SK-N-SH (cell line): ENCODE measurements at regions of chr22 and their contacts with region 1.

Region 1: GRCh38 chr22:20568989-20569769 is 61.8 kb downstream of the MED15 start:
- DNase-seq: no peak
- H3K4me3 ChIP-seq: no peak overlapping the region
- H3K27ac ChIP-seq: peak overlapping the region; percentile 66 to 76
- H3K4me1 ChIP-seq: peaks cover 9 to 22% of the 10 kb centered on the region in 2 experiments; a peak in 3 of 4 replicates
- H3K27me3 ChIP-seq: no peaks in the 10 kb centered on the region
- CTCF ChIP-seq: no peak
- EP300 ChIP-seq: no peak
- RAD21 ChIP-seq: no peak

Region 2: DNA sequence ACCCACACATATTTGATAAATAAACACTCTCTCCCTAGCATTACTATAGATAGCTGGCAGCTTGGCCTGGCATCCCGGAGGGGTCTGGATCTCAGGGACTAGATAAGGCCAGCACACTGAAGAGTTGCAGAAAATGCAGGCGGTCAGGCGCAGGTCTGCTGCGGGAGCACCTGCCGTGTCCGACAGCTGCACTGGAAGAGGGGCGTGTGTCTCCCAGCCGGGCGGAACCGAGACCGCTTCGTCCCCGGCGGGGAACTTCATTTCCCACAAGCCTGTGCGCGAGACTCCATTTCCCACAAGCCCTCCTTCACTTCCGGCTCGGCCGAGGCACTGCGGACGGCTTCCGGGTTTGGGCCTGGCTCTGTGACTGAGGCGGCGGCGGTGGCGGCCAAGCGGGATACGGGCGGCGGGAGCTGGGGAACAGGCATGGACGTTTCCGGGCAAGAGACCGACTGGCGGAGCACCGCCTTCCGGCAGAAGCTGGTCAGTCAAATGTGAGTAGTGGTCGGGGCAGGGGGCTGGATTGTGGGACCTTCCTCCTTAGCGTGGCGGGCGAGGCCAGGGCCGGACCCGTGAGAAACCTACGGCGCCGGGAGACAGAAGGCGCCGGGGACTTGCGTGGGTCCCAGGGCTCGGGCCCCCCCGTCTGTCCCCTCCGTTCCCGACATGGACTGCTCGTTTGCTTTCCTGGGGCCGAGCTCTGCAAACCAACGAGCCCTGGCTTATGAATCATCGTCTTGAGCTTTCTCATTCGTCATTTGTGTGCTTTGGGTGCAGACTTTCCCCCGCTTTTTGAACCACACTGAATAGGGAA is 61.7 kb before region 1 on chr22 and contains the start of gene MED15:
- CTCF ChIA-PET with region 1: interaction called, 11 read pairs
- POLR2A ChIA-PET with region 1: no interaction called
- DNase-seq: peak; percentile 90
- H3K4me3 ChIP-seq: peak within 1 kb of the TSS; percentile 67 to 78
- H3K27ac ChIP-seq: peak within 1 kb of the TSS; percentile 87 to 96
- H3K4me1 ChIP-seq: peaks cover 22 to 34% of the 10 kb centered on the region in 2 experiments; a peak in 3 of 4 replicates
- H3K27me3 ChIP-seq: no peaks in the 10 kb centered on the region
- CTCF ChIP-seq: no peak
- EP300 ChIP-seq: no peak
- RAD21 ChIP-seq: no peak
- polyA plus RNA-seq, gene MED15: 36.0 and 45.1 TPM in 2 replicates

Region 3: DNA sequence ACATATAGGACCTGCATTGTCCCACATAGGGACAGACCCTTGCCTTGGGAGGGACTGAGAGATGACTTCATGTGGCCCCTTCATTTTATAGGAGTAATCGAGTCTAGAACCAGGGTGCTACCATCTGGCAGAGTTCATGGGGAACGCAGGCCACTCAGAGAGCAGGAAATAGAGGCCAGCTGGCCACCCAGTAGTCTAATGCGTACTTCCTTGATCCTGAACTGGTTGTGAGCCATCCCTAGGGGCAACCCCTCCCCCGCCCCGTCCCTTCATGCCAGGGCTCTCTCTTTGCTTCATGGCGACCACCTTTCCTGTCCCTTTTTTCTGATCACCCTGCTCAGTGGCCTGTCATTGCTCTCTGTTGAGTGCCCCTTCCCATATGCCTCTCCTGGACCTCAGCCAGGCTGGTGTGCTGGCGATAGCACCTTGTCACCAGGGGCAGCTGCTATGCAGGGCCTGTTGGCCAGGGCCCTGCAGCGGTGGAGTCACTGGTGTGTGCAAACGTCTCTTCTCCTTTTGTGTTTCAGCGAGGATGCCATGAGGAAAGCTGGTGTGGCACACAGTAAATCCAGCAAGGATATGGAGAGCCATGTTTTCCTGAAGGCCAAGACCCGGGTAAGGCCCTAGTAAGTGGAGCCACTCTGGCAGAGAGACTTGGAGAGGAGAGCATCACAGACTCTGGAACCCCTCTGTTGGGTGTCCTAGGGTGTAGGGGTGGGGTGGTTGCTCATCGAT is 32.4 kb before region 1 on chr22:
- CTCF ChIA-PET with region 1: interaction called, 32 read pairs
- POLR2A ChIA-PET with region 1: no interaction called
- DNase-seq: peak; percentile 85
- H3K4me3 ChIP-seq: no peak overlapping the region
- H3K27ac ChIP-seq: peak overlapping the region in 1 of 2 experiments; percentile 93; a peak in 2 of 4 replicates
- H3K4me1 ChIP-seq: peaks cover 23 to 59% of the 10 kb centered on the region in 2 experiments
- H3K27me3 ChIP-seq: no peaks in the 10 kb centered on the region
- CTCF ChIP-seq: no peak
- EP300 ChIP-seq: peak in 1 of 2 experiments; percentile 78; a peak in 2 of 4 replicates
- RAD21 ChIP-seq: no peak; the same call in 1 of the 2 replicates

Region 4: GRCh38 chr22:20550821-20551744 is 18.1 kb before region 1 on chr22:
- CTCF ChIA-PET with region 1: interaction called, 103 read pairs
- POLR2A ChIA-PET with region 1: no interaction called
- DNase-seq: no peak
- H3K4me3 ChIP-seq: no peak overlapping the region
- H3K27ac ChIP-seq: peak overlapping the region; percentile 48 to 64
- H3K4me1 ChIP-seq: peaks cover 29 to 40% of the 10 kb centered on the region in 2 experiments; a peak in 3 of 4 replicates
- H3K27me3 ChIP-seq: no peaks in the 10 kb centered on the region
- CTCF ChIP-seq: no peak
- EP300 ChIP-seq: no peak
- RAD21 ChIP-seq: no peak

Region 5: GRCh38 chr22:20606041-20606783 is 37.0 kb after region 1 on chr22:
- CTCF ChIA-PET with region 1: interaction called, 12 read pairs
- POLR2A ChIA-PET with region 1: no interaction called
- DNase-seq: peak; percentile 64
- H3K4me3 ChIP-seq: no peak overlapping the region; a peak in 1 of 4 replicates
- H3K27ac ChIP-seq: no peak overlapping the region
- H3K4me1 ChIP-seq: peaks cover 0 to 9% of the 10 kb centered on the region in 2 experiments; a peak in 1 of 4 replicates
- H3K27me3 ChIP-seq: no peaks in the 10 kb centered on the region; the same call in 1 of the 2 replicates
- CTCF ChIP-seq: peak; percentile 58
- EP300 ChIP-seq: no peak
- RAD21 ChIP-seq: peak; percentile 58

Region 6: DNA sequence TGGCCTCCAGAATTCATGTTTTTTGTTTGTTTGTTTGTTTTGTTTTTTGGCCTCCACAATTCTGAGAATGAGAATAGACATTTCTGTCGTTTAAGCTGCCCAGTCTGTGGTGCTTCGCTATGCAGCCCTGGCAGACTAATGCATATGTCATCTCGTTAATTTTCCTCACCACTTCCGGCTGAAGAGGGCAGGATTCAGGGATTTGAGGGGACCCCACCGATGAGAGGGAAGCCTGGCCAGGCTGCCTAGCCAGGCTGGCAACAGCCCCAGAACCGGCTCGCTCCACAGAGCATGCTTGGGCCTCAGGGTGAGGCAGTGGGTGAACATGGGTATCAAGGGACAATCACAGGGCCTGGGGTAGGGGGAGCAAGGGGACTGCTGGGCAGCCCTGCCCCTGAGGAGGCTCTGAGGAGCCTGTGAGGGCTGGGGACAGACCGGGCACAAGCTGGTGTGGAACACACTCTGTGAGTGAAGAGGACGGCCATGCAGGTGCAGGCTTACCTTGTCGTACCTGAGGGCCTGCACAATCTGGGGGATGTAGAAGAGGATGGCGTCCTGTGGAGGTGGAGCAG is 156.9 kb after region 1 on chr22:
- CTCF ChIA-PET with region 1: no interaction called
- POLR2A ChIA-PET with region 1: no interaction called
- DNase-seq: no peak
- H3K4me3 ChIP-seq: no peak overlapping the region
- H3K27ac ChIP-seq: no peak overlapping the region
- H3K4me1 ChIP-seq: peaks cover 0 to 12% of the 10 kb centered on the region in 2 experiments; a peak in 1 of 4 replicates
- H3K27me3 ChIP-seq: no peaks in the 10 kb centered on the region
- CTCF ChIP-seq: no peak
- EP300 ChIP-seq: no peak
- RAD21 ChIP-seq: no peak